Head of caudate nucleus (tissue), 42 donors: ENCODE measurements at regions of chr20 and their contacts with region 1.

Region 1: DNA sequence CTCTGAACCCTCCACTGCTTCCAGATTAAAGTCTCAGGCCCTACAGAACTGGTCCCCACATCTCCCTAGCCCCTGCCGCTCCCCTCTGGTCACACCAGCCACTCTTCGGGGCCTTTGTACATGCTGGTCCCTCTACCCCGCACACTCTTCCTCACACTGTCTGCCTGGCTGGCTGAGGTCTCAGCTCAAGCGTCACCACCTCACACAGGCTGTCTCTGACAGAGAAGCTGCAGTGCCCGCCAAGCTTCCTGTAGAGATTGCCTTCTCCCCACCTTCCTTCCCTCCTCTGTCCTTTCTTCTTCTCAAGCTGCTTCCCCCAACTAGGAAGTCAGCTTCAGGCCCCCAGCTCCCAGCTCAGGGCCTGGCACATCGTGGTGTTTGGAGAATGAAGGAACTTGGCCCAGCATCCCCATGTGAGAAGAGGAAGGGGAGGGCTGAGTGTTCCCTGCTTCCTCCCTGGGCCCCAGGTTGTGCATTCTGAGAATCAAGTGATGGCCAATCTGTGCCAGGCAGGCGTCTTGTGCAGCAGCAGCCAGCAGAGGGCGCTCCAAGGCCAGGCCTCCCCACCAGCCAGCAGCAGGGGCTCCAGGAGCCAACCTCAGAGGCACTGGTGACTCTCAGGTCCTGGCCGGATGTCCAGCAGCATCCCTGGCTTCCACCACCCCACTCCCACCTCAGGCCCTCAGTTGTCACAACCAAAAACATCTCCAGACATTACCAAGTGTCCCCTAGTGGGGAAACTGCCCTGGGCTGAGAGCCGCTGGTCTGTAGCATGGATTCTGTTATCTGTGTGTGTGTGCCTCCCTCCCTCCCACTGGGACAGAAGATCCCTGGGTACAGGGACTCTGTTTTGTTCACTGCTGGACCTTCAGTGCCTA is 192.1 kb downstream of the PREX1 start:
- DNase-seq: peak; percentile 53 to 90 (median 81)

Region 2: GRCh38 chr20:48904365-48905296 is 269.0 kb after region 1 on chr20:
- intact Hi-C with region 1: loop called (anchors 5 kb)
- DNase-seq: peak in 41 of 42 donors; percentile 23 to 89 (median 72)